ENCODE measurements at regions of chr11 and their contacts with region 1.

Region 1: DNA sequence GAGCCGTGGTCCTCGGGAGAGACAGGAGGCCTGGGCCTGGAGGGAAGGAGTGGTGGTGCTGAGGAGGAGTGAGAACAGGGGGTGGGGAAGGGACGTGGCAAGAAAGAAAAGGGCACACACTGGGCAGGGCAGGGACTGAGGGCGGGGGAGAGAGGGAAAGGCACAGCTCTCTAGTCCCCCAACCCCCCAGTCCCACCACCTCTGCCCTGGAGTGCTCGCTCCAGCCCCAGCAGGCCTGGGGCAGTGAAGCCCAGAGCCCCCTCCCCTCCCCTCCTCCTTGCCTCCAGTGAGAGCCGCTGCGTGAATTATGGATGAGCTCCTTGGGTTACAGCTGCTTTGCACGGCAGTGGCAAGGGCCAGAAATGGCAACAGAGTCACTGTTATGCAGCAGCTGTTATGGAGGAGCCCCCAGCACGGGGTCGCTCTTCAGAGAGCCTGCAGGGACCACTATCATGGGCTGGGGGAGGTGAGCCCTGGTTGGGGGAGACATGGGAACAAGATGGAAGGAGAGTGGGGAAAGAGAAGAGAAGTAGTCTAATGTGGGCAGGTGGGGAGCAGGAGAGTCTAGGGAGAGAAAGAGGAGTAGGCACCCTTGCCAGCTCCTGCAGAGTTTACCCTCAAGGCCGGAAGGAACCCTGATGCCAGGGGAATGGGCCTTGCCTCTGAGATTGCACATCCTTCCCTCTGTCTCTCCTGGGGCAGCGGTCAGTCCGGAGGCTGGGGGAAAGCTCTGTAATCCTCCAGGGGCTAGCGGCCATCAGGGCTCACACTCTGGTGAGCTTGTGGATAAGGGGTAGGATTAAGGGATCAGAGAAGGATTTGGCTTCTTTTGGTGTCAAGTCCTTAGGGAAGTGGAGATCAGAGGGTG is 3.6 kb downstream of the RTN4RL2 start:
- DNase-seq: no peak
- H3K4me3 ChIP-seq: no peak overlapping the region
- H3K27ac ChIP-seq: no peak overlapping the region
- H3K4me1 ChIP-seq: peaks cover 12% of the 10 kb centered on the region
- H3K27me3 ChIP-seq: peaks cover 19% of the 10 kb centered on the region
- CTCF ChIP-seq: no peak

Region 2: GRCh38 chr11:57213342-57214095 is 250.4 kb before region 1 on chr11:
- CTCF ChIA-PET with region 1: no interaction called
- POLR2A ChIA-PET with region 1: no interaction called
- intact Hi-C with region 1: no loop called
- DNase-seq: no peak
- H3K4me3 ChIP-seq: no peak overlapping the region
- H3K27ac ChIP-seq: no peak overlapping the region
- H3K4me1 ChIP-seq: no peaks in the 10 kb centered on the region
- H3K27me3 ChIP-seq: no peaks in the 10 kb centered on the region
- CTCF ChIP-seq: no peak

Region 3: DNA sequence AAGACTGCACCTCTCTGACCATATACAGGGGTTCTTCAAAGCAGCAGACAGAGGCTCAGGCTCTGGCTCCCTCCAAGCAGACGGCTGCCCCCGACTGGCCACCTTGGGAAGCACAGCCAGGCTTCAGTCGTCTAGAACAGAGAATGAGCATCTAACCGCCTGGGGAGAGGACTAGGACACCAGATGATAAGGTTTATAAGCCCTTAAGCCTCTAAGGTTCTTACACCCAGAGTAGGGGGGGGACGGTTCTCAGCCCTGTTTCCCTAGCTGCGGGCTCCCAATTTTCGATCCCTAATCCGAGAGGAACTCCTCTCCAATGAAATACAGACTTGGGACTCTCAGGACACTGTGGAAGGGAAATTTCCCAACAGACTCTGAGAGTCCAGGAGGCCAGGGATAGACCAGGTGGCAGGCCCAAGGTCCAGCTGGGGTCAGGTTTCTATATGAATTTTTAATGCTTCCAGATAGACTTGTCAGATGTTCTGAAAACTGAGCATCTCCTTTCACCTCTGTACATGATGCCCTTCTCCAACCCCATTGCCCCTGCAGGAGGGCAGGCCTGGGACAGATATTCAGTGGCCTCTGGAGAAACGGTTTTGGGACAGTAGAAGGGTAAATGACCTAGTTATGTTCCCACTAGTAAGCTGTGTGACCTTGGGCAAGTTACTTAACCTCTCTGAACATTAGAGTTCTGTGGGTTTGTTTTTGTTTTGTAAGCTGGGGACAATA is 16.7 kb after region 1 on chr11:
- CTCF ChIA-PET with region 1: interaction called, 14 read pairs
- POLR2A ChIA-PET with region 1: interaction called, 6 read pairs
- intact Hi-C with region 1: no loop called
- DNase-seq: peak; percentile 62 to 69
- H3K4me3 ChIP-seq: no peak overlapping the region
- H3K27ac ChIP-seq: no peak overlapping the region
- H3K4me1 ChIP-seq: peaks cover 6% of the 10 kb centered on the region; the same call in 1 of the 2 replicates
- H3K27me3 ChIP-seq: peaks cover 28% of the 10 kb centered on the region
- CTCF ChIP-seq: peak; percentile 90